Activated CD8-positive, alpha-beta T cell treated with anti-CD3 and anti-CD28 coated beads for 36 hours (primary cell): ENCODE measurements at regions of chr5 and their contacts with region 1.

Region 1: DNA sequence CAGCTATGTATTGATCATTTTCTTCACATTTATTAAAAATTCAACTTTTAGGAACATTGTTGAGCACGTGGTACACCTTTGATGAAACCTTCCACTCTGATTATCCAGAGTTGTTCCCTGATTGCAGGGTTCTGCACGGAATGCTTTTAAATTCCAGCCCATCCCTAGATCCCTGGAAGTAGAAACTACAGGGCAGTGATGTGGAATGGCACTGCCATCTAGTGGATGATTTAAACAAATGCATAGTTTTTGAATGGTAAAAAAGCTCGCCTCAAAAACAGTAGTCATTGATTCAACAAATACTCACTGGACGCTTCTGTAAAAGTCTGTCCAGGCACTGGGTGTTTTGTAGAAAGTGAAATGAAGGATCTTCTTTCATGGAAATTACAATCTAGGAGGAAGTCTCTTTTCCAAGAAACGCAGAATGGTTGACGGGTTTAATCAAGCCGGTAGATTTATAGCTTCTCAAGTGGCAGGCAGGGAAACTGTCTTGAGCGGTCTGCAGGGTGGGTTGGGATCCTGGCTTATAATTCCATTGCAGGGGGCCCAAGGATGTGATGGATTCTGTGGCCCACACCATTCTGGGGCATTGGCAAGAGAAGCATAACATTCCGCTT is 118.4 kb downstream of the ARHGAP26 start:
- DNase-seq: no peak
- ATAC-seq: no peak
- H3K4me3 Mint-ChIP-seq: no peak overlapping the region
- H3K27ac Mint-ChIP-seq: no peak overlapping the region
- H3K4me1 Mint-ChIP-seq: peaks cover 8% of the 10 kb centered on the region
- H3K27me3 Mint-ChIP-seq: no peaks in the 10 kb centered on the region
- CTCF ChIP-seq: peak; percentile 93

Region 2: DNA sequence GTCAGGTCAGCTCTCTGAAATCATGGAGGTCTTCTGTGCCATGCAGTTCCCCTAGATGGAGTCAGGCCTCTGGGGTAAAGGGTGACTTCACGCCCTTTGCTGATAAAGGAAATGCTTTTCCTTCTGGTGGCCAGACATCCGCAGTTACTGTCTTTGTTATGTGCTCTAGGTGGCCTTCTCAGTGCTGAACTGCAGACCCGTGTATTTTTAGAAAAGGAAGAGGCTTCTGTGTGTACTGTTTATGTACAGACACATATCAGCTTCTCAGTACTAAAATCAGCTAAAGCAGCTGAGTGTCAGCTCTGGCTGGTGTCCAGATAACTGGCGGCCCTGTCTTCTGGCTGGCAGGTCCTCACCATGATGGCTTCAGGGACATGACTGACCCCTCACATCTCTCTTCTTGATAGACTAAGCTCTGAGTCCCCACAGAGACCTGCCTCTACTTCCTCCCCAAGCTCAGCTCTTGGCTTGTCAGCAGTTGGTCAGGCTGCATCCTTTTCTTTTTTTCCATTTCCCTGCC is 43.1 kb before region 1 on chr5:
- CTCF ChIA-PET with region 1: interaction called, 14 read pairs
- POLR2A ChIA-PET with region 1: no interaction called
- intact Hi-C with region 1: no loop called
- DNase-seq: peak; percentile 23
- ATAC-seq: peak; percentile 75
- H3K4me3 Mint-ChIP-seq: peak overlapping the region; percentile 18
- H3K27ac Mint-ChIP-seq: peak overlapping the region; percentile 86
- H3K4me1 Mint-ChIP-seq: peaks cover 54% of the 10 kb centered on the region
- H3K27me3 Mint-ChIP-seq: no peaks in the 10 kb centered on the region
- CTCF ChIP-seq: no peak

Region 3: DNA sequence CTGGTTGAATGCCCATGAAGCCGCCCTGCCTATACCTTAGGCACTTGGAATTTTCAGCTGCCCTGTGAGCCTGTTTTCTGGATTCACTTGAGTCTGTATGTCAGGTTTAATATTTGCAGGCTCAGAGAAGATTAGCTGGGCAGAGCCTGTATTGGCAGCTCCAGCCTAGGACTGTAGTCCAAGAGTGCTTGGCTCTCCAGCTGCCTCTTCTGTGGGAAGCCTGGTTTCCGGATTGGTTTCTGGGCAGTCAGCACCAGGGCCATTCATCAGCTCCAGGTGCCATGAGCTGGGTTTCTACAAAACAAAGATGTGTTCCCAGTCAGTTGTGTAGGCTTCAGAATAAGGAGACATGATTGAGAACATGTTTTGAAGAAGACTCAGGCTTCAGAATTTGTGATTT is 28.3 kb before region 1 on chr5:
- CTCF ChIA-PET with region 1: interaction called, 16 read pairs
- POLR2A ChIA-PET with region 1: no interaction called
- intact Hi-C with region 1: no loop called
- DNase-seq: no peak
- ATAC-seq: no peak
- H3K4me3 Mint-ChIP-seq: no peak overlapping the region
- H3K27ac Mint-ChIP-seq: no peak overlapping the region
- H3K4me1 Mint-ChIP-seq: peaks cover 53% of the 10 kb centered on the region
- H3K27me3 Mint-ChIP-seq: no peaks in the 10 kb centered on the region
- CTCF ChIP-seq: no peak

Region 4: DNA sequence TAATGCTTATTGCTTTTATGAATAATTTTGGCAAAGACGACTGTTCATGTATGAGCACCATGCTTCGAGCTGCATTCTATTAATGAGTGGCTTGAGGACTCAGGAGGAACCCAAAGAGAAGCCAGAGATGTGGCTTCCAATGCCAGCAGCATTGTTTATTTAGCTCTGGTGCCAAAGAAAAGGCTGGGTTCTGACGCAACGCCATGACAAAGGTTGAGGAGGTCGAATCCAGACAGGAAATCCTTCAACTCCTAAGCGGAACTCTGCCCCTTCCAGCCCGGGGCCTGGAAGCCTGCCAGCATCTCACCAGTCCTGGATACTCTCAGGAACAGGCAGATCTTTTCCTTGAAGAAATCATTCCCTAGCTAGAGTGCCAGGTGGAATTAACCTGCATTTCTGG is 14.0 kb before region 1 on chr5:
- CTCF ChIA-PET with region 1: interaction called, 36 read pairs
- POLR2A ChIA-PET with region 1: no interaction called
- intact Hi-C with region 1: no loop called
- DNase-seq: no peak
- ATAC-seq: no peak
- H3K4me3 Mint-ChIP-seq: no peak overlapping the region
- H3K27ac Mint-ChIP-seq: no peak overlapping the region
- H3K4me1 Mint-ChIP-seq: peaks cover 7% of the 10 kb centered on the region
- H3K27me3 Mint-ChIP-seq: no peaks in the 10 kb centered on the region
- CTCF ChIP-seq: no peak

Region 5: DNA sequence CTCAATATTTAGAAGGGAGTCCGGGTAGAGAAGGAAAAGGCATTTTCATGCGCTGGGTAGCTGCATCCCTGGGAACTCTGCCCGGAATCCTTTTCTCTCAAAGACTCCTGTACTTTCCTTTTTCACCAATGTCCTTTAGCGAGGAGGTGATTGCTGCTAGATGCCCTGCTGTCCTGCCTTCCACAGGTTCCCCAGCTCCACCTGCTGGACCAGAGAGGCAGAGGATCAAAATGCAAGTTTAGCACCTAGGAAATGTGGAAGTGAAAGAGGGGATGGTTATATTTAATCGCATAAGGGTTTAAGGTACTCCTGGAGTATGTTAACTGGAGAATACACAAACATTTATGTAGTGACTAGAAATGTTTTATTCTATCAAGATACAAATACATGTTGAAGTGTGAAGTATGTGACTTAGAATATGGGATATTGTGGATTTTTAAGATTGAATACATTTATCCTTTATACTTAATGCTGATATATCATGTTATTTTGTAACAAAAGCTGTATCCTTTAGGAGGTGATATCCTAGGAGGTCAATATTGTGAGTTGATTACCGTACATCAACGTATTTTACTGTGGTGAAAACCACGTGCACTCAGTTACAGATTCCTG is 27.3 kb after region 1 on chr5:
- CTCF ChIA-PET with region 1: interaction called, 13 read pairs
- POLR2A ChIA-PET with region 1: no interaction called
- intact Hi-C with region 1: no loop called
- DNase-seq: peak; percentile 41
- ATAC-seq: no peak
- H3K4me3 Mint-ChIP-seq: no peak overlapping the region
- H3K27ac Mint-ChIP-seq: no peak overlapping the region
- H3K4me1 Mint-ChIP-seq: no peaks in the 10 kb centered on the region
- H3K27me3 Mint-ChIP-seq: no peaks in the 10 kb centered on the region
- CTCF ChIP-seq: no peak